Activated B cell treated with CpG ODN at 0.5 μM for 24 hours (primary cell): ENCODE measurements at regions of chr19 and their contacts with region 1.

Region 1: GRCh38 chr19:39341719-39342604 is at the start of gene SAMD4B:
- DNase-seq: peak; percentile 97
- ATAC-seq: peak; percentile 91
- H3K4me3 Mint-ChIP-seq: peak within 1 kb of the TSS; percentile 99
- H3K27ac Mint-ChIP-seq: peak within 1 kb of the TSS; percentile 97
- H3K4me1 Mint-ChIP-seq: peaks cover 69% of the 10 kb centered on the region
- H3K27me3 Mint-ChIP-seq: no peaks in the 10 kb centered on the region
- CTCF ChIP-seq: no peak
- total RNA-seq, gene SAMD4B: 53.0 and 60.7 TPM in 2 replicates

Region 2: GRCh38 chr19:39277612-39278011 is 64.3 kb before region 1 on chr19:
- CTCF ChIA-PET with region 1: no interaction called
- POLR2A ChIA-PET with region 1: no interaction called
- intact Hi-C with region 1: no loop called
- DNase-seq: no peak
- ATAC-seq: no peak
- H3K4me3 Mint-ChIP-seq: no peak overlapping the region
- H3K27ac Mint-ChIP-seq: no peak overlapping the region
- H3K4me1 Mint-ChIP-seq: no peaks in the 10 kb centered on the region
- H3K27me3 Mint-ChIP-seq: peaks cover 9% of the 10 kb centered on the region
- CTCF ChIP-seq: no peak

Region 3: GRCh38 chr19:39314016-39314728 is 27.8 kb before region 1 on chr19:
- CTCF ChIA-PET with region 1: no interaction called
- POLR2A ChIA-PET with region 1: no interaction called
- intact Hi-C with region 1: no loop called
- DNase-seq: no peak
- ATAC-seq: no peak
- H3K4me3 Mint-ChIP-seq: no peak overlapping the region
- H3K27ac Mint-ChIP-seq: no peak overlapping the region
- H3K4me1 Mint-ChIP-seq: no peaks in the 10 kb centered on the region
- H3K27me3 Mint-ChIP-seq: peaks cover 2% of the 10 kb centered on the region
- CTCF ChIP-seq: no peak

Region 4: GRCh38 chr19:39480337-39481228 is 138.6 kb after region 1 on chr19 and contains the start of gene TIMM50:
- CTCF ChIA-PET with region 1: no interaction called
- POLR2A ChIA-PET with region 1: no interaction called
- intact Hi-C with region 1: loop called (anchors 1 kb)
- DNase-seq: peak; percentile 98
- ATAC-seq: peak; percentile 99
- H3K4me3 Mint-ChIP-seq: peak within 1 kb of the TSS; percentile 91
- H3K27ac Mint-ChIP-seq: peak within 1 kb of the TSS; percentile 85
- H3K4me1 Mint-ChIP-seq: peaks cover 25% of the 10 kb centered on the region
- H3K27me3 Mint-ChIP-seq: no peaks in the 10 kb centered on the region
- CTCF ChIP-seq: no peak
- total RNA-seq, gene TIMM50: 63.8 and 68.9 TPM in 2 replicates